Endothelial cell of umbilical vein (primary cell): ENCODE measurements at regions of chr16 and their contacts with region 1.

Region 1: GRCh38 chr16:4586291-4586690 is 28.4 kb downstream of the UBALD1 start:
- DNase-seq: no peak
- H3K4me3 ChIP-seq: no peak overlapping the region
- H3K27ac ChIP-seq: no peak overlapping the region
- H3K4me1 ChIP-seq: no peaks in the 10 kb centered on the region
- H3K27me3 ChIP-seq: peaks cover 0 to 9% of the 10 kb centered on the region in 2 experiments
- CTCF ChIP-seq: no peak
- POLR2A ChIP-seq: no peak

Region 2: GRCh38 chr16:4500272-4500671 is 86.0 kb before region 1 on chr16:
- CTCF ChIA-PET with region 1: interaction called, 48 read pairs
- POLR2A ChIA-PET with region 1: no interaction called
- dilution Hi-C with region 1: no loop called
- intact Hi-C with region 1: no loop called
- DNase-seq: peak; percentile 83
- H3K4me3 ChIP-seq: peak overlapping the region in 1 of 3 experiments; percentile 31
- H3K27ac ChIP-seq: peak overlapping the region; percentile 76
- H3K4me1 ChIP-seq: peaks cover 27% of the 10 kb centered on the region
- H3K27me3 ChIP-seq: no peaks in the 10 kb centered on the region
- CTCF ChIP-seq: no peak
- POLR2A ChIP-seq: no peak

Region 3: GRCh38 chr16:4506450-4506849 is 79.8 kb before region 1 on chr16:
- CTCF ChIA-PET with region 1: interaction called, 48 read pairs
- POLR2A ChIA-PET with region 1: no interaction called
- dilution Hi-C with region 1: no loop called
- intact Hi-C with region 1: loop called (anchors 1 kb)
- DNase-seq: peak; percentile 77
- H3K4me3 ChIP-seq: no peak overlapping the region
- H3K27ac ChIP-seq: no peak overlapping the region
- H3K4me1 ChIP-seq: peaks cover 5% of the 10 kb centered on the region
- H3K27me3 ChIP-seq: no peaks in the 10 kb centered on the region
- CTCF ChIP-seq: peak; percentile 83 to 85
- POLR2A ChIP-seq: no peak

Region 4: DNA sequence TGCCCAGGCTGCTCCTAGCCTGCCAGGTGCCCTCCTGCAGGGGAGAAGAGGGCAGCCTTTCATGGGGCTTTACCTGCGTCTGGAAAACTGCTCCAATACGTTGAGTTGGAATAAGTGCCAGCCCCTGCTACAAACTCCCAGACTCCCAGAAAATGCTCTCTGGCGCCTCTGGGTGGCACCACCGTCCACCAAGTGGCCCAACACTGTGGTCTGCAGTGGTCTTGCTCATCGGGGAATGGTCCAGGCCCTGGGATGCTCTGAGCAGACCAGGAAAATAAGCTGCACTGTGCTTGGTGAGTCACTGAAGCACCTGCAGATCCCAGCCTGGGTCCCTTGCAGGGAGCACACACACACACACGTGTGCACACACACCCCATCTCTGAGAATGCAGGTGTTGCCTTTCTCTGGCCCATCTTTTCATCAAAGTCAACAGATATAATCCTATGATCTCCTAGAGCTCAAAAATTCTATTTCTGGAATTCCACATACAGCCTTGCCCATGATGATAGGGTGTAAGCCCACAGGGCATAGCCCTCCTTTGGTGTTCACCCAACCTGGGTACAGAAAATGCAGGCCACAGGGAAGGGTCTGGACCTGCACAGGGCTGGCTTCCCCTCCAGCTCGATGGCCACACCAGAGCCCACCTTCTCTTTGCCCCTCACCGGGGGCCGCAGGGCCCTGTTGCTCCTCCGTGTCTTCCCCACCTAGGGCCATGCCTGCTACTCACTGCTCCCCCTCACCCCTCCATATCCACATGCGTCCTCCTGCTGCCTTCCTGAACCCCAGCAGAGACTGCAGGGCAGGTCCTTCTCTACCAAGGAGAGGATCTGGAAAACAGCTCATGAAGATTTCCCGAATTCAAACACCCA is 68.2 kb before region 1 on chr16:
- CTCF ChIA-PET with region 1: interaction called, 19 read pairs
- POLR2A ChIA-PET with region 1: no interaction called
- dilution Hi-C with region 1: no loop called
- intact Hi-C with region 1: loop called (anchors 1 kb)
- DNase-seq: peak; percentile 66
- H3K4me3 ChIP-seq: no peak overlapping the region
- H3K27ac ChIP-seq: no peak overlapping the region
- H3K4me1 ChIP-seq: peaks cover 22% of the 10 kb centered on the region
- H3K27me3 ChIP-seq: no peaks in the 10 kb centered on the region
- CTCF ChIP-seq: peak; percentile 64 to 76
- POLR2A ChIP-seq: no peak

Region 5: DNA sequence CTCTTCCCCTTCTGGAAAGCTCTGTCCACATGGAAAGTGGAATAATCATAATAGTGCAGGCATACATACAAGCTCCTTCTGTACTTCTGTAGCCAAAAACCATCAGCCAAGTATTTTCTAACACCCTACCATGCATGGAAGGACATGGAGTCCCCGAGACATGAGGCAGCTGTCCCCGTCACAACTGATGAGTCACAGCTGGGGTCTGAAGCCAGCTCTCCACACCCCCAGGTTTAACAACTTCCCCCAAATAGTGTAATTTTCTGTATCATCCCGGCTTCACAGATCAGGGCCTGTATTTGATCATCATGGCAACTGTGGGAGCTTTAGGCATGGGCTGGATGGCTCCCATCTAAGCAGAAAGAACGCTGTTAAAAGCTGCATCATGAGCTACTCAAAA is 13.6 kb before region 1 on chr16:
- CTCF ChIA-PET with region 1: interaction called, 14 read pairs
- POLR2A ChIA-PET with region 1: no interaction called
- dilution Hi-C with region 1: no loop called
- intact Hi-C with region 1: no loop called
- DNase-seq: no peak
- H3K4me3 ChIP-seq: no peak overlapping the region
- H3K27ac ChIP-seq: no peak overlapping the region
- H3K4me1 ChIP-seq: no peaks in the 10 kb centered on the region
- H3K27me3 ChIP-seq: peaks cover 2 to 3% of the 10 kb centered on the region in 2 experiments
- CTCF ChIP-seq: no peak
- POLR2A ChIP-seq: no peak

Region 6: GRCh38 chr16:4597174-4597573 is 10.9 kb after region 1 on chr16:
- CTCF ChIA-PET with region 1: interaction called, 15 read pairs
- POLR2A ChIA-PET with region 1: no interaction called
- dilution Hi-C with region 1: no loop called
- intact Hi-C with region 1: no loop called
- DNase-seq: no peak
- H3K4me3 ChIP-seq: no peak overlapping the region
- H3K27ac ChIP-seq: no peak overlapping the region
- H3K4me1 ChIP-seq: no peaks in the 10 kb centered on the region
- H3K27me3 ChIP-seq: peaks cover 2 to 3% of the 10 kb centered on the region in 2 experiments
- CTCF ChIP-seq: no peak
- POLR2A ChIP-seq: no peak

Region 7: GRCh38 chr16:4780235-4780634 is 193.9 kb after region 1 on chr16:
- CTCF ChIA-PET with region 1: no interaction called
- POLR2A ChIA-PET with region 1: no interaction called
- dilution Hi-C with region 1: no loop called
- intact Hi-C with region 1: no loop called
- DNase-seq: no peak
- H3K4me3 ChIP-seq: no peak overlapping the region
- H3K27ac ChIP-seq: no peak overlapping the region
- H3K4me1 ChIP-seq: no peaks in the 10 kb centered on the region
- H3K27me3 ChIP-seq: no peaks in the 10 kb centered on the region
- CTCF ChIP-seq: no peak
- POLR2A ChIP-seq: no peak